Activated CD4-positive, alpha-beta memory T cell treated with anti-CD3 and anti-CD28 coated beads, Interleukin-2, amount 10 ng/mL, durations not matched to agents 7 days and 5 days (primary cell): ENCODE measurements at regions of chr18 and their contacts with region 1.

Region 1: DNA sequence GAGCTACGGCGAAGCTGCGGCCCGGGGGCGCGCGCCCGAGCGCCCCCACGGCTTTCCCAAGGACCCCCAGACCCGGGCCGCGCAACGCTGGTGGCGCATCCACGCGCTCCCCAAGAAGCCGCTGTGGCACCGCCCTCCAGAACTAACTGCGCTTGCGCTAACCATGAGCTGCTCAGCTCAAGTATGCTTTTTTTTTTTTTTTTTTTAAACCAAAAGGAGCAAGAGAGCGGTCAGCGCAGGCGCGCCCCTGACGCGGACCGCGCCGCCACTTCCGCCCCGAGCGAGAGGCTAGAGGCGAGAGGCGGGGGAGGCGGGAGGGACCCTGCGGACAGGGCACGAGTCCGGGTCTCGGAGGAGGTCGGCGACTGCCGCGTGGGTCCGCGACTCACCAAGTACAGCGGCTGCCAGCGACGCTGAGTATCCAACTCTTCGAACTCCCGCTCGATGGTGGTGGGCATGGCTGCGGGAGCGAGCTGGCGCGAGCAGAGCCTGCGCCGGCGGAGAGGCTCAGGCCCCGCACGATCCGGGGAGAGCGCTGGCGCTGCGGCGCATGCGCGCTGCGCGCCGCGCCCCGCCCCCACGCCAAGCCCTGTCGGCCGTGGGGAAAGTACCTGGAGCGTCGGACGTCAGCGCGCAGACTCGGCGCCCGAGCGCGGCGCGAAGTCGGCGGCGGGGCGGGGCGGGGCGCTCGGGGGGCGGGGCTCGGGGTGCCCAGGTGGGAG is at the start of gene PTPN2:
- DNase-seq: peak; percentile 93
- H3K4me3 Mint-ChIP-seq: peak within 1 kb of the TSS; percentile 92
- H3K27ac Mint-ChIP-seq: peak within 1 kb of the TSS; percentile 91
- H3K4me1 Mint-ChIP-seq: peaks cover 60% of the 10 kb centered on the region
- H3K27me3 Mint-ChIP-seq: no peaks in the 10 kb centered on the region
- total RNA-seq, gene PTPN2: 82.9 to 90.8 TPM

Region 2: DNA sequence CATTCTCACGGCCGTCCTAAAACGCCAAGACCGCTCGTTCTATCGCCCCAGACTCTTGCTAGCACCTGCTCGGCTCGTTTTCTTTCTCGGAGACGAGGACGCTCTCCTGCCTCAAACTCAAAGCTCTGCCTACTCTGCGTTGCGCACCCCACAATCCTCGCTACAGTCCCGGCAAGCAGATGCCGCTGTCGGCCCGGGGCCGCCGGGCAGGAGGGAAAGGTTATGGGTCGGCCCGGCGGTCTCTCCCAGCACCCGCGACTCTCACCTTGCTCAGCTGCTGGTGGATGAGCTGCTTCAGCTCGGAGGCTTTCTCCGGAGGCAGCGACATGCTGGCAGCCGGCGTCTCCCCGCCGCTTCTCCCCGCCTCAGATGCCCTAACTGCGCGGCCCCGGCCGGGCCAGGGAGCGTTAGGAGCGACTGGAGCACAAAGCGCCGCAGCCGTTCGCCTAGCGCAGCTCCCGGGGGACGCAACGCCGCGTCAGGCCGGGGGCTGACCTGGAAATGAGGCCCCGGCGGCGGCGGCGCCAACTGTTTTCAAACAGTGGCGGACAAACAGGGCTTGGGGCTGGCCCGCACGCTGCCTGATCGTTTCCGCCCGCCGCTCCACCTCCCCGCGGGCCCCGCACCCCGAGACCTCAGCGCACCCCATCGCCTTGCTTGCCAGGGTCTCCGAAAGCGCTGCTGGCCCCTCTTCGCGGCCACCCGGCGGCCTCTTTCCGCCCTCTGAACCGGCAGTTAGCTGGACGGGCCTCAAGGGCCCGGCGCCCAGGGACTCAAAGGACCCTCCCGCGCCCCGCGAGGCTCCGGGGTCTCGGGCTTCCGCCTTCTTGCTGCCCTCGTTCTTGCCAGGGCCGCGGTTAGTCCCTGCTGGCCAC is 181.4 kb before region 1 on chr18 and contains the starts of genes CEP76 and PSMG2:
- CTCF ChIA-PET with region 1: no interaction called
- POLR2A ChIA-PET with region 1: interaction called, 42 read pairs
- DNase-seq: peak; percentile 85
- H3K4me3 Mint-ChIP-seq: peak within 1 kb of the TSS; percentile 94
- H3K27ac Mint-ChIP-seq: peak within 1 kb of the TSS; percentile 91
- H3K4me1 Mint-ChIP-seq: peaks cover 51% of the 10 kb centered on the region
- H3K27me3 Mint-ChIP-seq: no peaks in the 10 kb centered on the region
- total RNA-seq, gene CEP76: 14.8 TPM
- total RNA-seq, gene PSMG2: 115 to 118 TPM

Region 3: DNA sequence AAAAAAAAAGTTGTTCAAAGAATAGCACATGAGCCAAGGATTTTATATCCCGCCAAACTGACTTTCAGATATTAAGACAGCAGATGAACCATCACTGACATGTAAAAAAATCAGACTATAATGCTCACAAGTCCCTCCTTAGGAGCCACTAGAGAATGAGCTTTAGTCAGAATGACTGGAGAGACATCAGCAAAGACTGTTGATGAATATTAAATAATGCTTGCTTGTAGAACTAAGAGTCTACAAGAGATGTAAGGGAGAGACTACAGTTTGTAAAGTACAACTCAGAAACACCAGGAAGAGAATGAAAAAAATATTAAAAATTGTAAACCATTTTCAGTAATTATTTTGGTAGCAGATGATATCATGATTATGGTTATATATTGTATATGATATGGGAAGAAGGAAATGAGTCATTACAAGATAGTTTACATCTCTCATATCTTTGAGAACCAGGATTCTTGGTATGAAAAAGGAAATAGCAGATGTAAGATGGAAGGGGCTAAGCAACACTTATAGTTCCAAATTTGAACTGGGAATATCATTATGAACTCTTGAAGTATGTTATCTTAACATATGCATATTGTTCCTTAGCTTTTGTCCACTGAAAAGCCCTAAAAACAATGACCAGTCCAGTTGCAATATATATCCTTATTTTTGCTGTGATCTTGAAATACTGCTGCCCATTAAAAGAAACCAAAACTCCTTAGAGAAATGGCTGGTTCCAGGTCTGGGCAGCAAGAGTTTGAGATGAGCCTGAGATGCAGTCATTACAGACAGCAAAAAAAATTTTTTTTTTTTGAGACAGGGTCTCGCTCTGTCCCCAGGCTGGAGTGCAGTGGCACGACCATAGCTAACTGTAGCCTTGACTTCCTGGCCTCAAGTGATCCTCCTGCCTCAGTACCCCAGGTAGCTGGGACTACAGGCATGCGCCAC is 55.5 kb before region 1 on chr18:
- CTCF ChIA-PET with region 1: no interaction called
- POLR2A ChIA-PET with region 1: interaction called, 11 read pairs
- DNase-seq: no peak
- H3K4me3 Mint-ChIP-seq: no peak overlapping the region
- H3K27ac Mint-ChIP-seq: peak overlapping the region; percentile 13
- H3K4me1 Mint-ChIP-seq: peaks cover 37% of the 10 kb centered on the region
- H3K27me3 Mint-ChIP-seq: no peaks in the 10 kb centered on the region

Region 4: DNA sequence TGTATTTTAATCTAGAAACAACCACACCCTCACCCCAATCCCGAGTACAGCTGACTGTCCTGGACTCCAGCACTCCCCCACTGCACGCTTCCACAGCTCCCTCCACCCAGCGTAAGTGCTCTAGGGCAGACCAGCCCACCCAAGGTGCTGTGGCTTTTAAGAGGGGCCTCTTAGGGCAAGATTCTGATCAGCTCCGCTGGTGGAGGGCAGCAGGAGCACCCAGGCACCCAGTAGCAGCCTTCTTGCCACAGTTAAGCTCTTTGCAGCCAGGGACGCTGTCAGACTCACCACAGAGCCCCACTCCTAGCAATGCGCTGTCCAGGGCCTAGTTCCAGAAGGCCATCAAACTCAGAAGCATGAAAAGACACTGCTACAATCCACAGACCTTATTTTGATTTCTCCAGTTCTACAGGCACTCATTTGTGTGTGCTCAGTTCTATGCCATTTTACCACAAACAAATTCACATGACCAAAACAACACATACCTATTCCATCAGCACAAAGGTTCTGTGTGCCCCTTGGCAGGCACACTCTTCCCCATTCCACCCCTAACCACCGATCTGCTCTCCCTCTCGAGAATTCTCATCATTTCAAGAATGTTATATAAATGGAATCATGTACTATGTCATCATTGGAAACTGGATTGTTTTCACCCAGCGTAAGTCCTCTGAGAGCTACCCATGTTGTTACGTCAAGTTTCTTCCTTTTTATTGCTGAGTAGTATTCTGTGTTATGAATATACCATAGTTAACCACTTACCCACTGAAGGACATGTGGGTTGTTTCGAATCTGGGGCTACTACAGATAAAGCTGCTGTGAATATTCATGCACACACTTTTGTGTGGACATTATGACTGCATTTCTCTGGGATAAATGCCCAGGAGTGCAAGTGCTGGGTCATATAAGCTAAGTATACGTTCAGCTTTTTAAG is 40.2 kb before region 1 on chr18:
- CTCF ChIA-PET with region 1: interaction called, 10 read pairs
- POLR2A ChIA-PET with region 1: interaction called, 96 read pairs
- DNase-seq: no peak
- H3K4me3 Mint-ChIP-seq: peak overlapping the region; percentile 8
- H3K27ac Mint-ChIP-seq: peak overlapping the region; percentile 63
- H3K4me1 Mint-ChIP-seq: peaks cover 72% of the 10 kb centered on the region
- H3K27me3 Mint-ChIP-seq: no peaks in the 10 kb centered on the region

Region 5: GRCh38 chr18:12867441-12868123 is 16.3 kb before region 1 on chr18:
- CTCF ChIA-PET with region 1: interaction called, 7 read pairs
- POLR2A ChIA-PET with region 1: interaction called, 83 read pairs
- DNase-seq: no peak
- H3K4me3 Mint-ChIP-seq: no peak overlapping the region
- H3K27ac Mint-ChIP-seq: peak overlapping the region; percentile 2
- H3K4me1 Mint-ChIP-seq: peaks cover 31% of the 10 kb centered on the region
- H3K27me3 Mint-ChIP-seq: no peaks in the 10 kb centered on the region

Region 6: GRCh38 chr18:13120983-13121441 is 237.2 kb after region 1 on chr18:
- CTCF ChIA-PET with region 1: no interaction called
- POLR2A ChIA-PET with region 1: no interaction called
- DNase-seq: no peak
- H3K4me3 Mint-ChIP-seq: no peak overlapping the region
- H3K27ac Mint-ChIP-seq: no peak overlapping the region
- H3K4me1 Mint-ChIP-seq: peaks cover 6% of the 10 kb centered on the region
- H3K27me3 Mint-ChIP-seq: no peaks in the 10 kb centered on the region